ENCODE measurements at regions of chr9 and their contacts with region 1.

Region 1: GRCh38 chr9:36400332-36401163 is 479 bp upstream of the RNF38 start:
- DNase-seq: peak; percentile 92
- H3K4me3 ChIP-seq: peak overlapping the region; percentile 82 to 94 (median 89)
- H3K27ac ChIP-seq: peak overlapping the region; percentile 88
- H3K4me1 ChIP-seq: peaks cover 18% of the 10 kb centered on the region
- H3K27me3 ChIP-seq: no peaks in the 10 kb centered on the region
- CTCF ChIP-seq: no peak

Region 2: GRCh38 chr9:36250079-36250478 is 150.5 kb before region 1 on chr9:
- CTCF ChIA-PET with region 1: no interaction called
- dilution Hi-C with region 1: no loop called
- in situ Hi-C with region 1: no loop called
- intact Hi-C with region 1: loop called (anchors 5 kb)
- DNase-seq: peak; percentile 57
- H3K4me3 ChIP-seq: no peak overlapping the region
- H3K27ac ChIP-seq: no peak overlapping the region
- H3K4me1 ChIP-seq: peaks cover 8% of the 10 kb centered on the region
- H3K27me3 ChIP-seq: no peaks in the 10 kb centered on the region
- CTCF ChIP-seq: no peak

Region 3: GRCh38 chr9:36337865-36338264 is 62.7 kb before region 1 on chr9:
- CTCF ChIA-PET with region 1: no interaction called
- dilution Hi-C with region 1: no loop called
- in situ Hi-C with region 1: no loop called
- intact Hi-C with region 1: loop called (anchors 2 kb)
- DNase-seq: peak; percentile 40
- H3K4me3 ChIP-seq: no peak overlapping the region
- H3K27ac ChIP-seq: peak overlapping the region; percentile 2
- H3K4me1 ChIP-seq: peaks cover 22% of the 10 kb centered on the region
- H3K27me3 ChIP-seq: no peaks in the 10 kb centered on the region
- CTCF ChIP-seq: no peak

Region 4: DNA sequence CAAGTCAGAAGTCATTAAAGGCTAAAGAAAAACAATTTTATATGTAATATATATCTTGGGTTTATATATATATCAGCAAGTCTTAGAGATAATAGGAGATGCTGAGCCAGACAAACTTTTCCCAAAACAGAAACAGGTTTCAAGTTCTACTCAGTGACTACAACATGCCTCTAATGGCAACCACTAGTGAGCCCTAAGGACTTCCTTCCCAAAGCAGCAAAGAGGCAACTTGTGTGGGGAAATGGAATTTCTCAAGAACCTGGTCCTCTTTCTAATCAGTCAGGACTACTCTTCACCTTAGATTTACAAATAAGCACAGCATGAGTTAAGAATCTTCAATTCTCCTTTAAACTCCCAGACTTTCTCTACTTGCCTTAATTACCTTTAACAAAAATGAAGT is 18.1 kb before region 1 on chr9:
- CTCF ChIA-PET with region 1: no interaction called
- dilution Hi-C with region 1: no loop called
- in situ Hi-C with region 1: no loop called
- intact Hi-C with region 1: no loop called
- DNase-seq: no peak
- H3K4me3 ChIP-seq: no peak overlapping the region
- H3K27ac ChIP-seq: no peak overlapping the region
- H3K4me1 ChIP-seq: peaks cover 10% of the 10 kb centered on the region
- H3K27me3 ChIP-seq: no peaks in the 10 kb centered on the region
- CTCF ChIP-seq: no peak

Region 5: GRCh38 chr9:36566813-36567221 is 166.3 kb after region 1 on chr9:
- CTCF ChIA-PET with region 1: no interaction called
- dilution Hi-C with region 1: no loop called
- in situ Hi-C with region 1: loop called in 1 of 2 experiments (anchors 10 kb)
- intact Hi-C with region 1: loop called (anchors 5 kb)
- DNase-seq: peak; percentile 65
- H3K4me3 ChIP-seq: no peak overlapping the region
- H3K27ac ChIP-seq: peak overlapping the region; percentile 5
- H3K4me1 ChIP-seq: peaks cover 9% of the 10 kb centered on the region
- H3K27me3 ChIP-seq: no peaks in the 10 kb centered on the region
- CTCF ChIP-seq: no peak

Region 6: GRCh38 chr9:36665921-36666431 is 265.4 kb after region 1 on chr9:
- CTCF ChIA-PET with region 1: no interaction called
- dilution Hi-C with region 1: no loop called
- in situ Hi-C with region 1: no loop called
- intact Hi-C with region 1: no loop called
- DNase-seq: no peak
- H3K4me3 ChIP-seq: no peak overlapping the region
- H3K27ac ChIP-seq: no peak overlapping the region
- H3K4me1 ChIP-seq: peaks cover 15% of the 10 kb centered on the region
- H3K27me3 ChIP-seq: no peaks in the 10 kb centered on the region
- CTCF ChIP-seq: no peak

Region 7: GRCh38 chr9:36728651-36729520 is 328.3 kb after region 1 on chr9:
- CTCF ChIA-PET with region 1: no interaction called
- dilution Hi-C with region 1: no loop called
- in situ Hi-C with region 1: loop called in 1 of 2 experiments (anchors 25 kb)
- intact Hi-C with region 1: no loop called
- DNase-seq: peak; percentile 68
- H3K4me3 ChIP-seq: no peak overlapping the region
- H3K27ac ChIP-seq: no peak overlapping the region
- H3K4me1 ChIP-seq: no peaks in the 10 kb centered on the region
- H3K27me3 ChIP-seq: no peaks in the 10 kb centered on the region
- CTCF ChIP-seq: peak; percentile 80 to 89

Measured in mammary epithelial cell (primary cell).